ENCODE measurements at regions of chr11 and their contacts with region 1.

Region 1: GRCh38 chr11:117535261-117535781 is 207.7 kb downstream of the CEP164 start:
- DNase-seq: no peak
- H3K4me3 ChIP-seq: no peak overlapping the region
- H3K27ac ChIP-seq: no peak overlapping the region
- H3K4me1 ChIP-seq: no peaks in the 10 kb centered on the region
- CTCF ChIP-seq: no peak

Region 2: DNA sequence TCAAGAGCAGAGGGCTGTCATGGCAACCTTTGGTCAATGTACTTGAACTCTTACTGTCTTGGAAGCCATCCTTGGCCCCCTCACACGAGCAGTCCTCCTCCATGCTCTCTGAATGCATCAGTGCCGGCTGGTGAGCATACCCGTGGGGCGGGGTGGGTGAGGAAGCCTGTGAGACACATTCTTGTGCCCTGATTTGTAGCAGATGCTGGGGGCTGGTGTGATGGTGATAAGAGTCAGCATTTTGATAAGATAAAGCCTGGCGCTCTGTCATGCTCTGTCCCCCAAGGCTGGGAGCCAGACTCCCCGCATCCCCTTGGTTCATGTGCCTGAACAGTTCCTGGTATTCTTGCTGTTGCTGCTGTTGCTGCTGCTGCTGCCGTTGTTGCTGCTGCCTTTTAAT is 677.4 kb before region 1 on chr11:
- CTCF ChIA-PET with region 1: interaction called, 18 read pairs
- POLR2A ChIA-PET with region 1: no interaction called
- intact Hi-C with region 1: no loop called
- DNase-seq: no peak
- H3K4me3 ChIP-seq: no peak overlapping the region
- H3K27ac ChIP-seq: no peak overlapping the region
- H3K4me1 ChIP-seq: peaks cover 16% of the 10 kb centered on the region
- CTCF ChIP-seq: no peak

Region 3: GRCh38 chr11:117479372-117479771 is 55.9 kb before region 1 on chr11:
- CTCF ChIA-PET with region 1: no interaction called
- POLR2A ChIA-PET with region 1: no interaction called
- intact Hi-C with region 1: no loop called
- DNase-seq: peak; percentile 47
- H3K4me3 ChIP-seq: no peak overlapping the region
- H3K27ac ChIP-seq: no peak overlapping the region
- H3K4me1 ChIP-seq: no peaks in the 10 kb centered on the region
- CTCF ChIP-seq: peak; percentile 73

Region 4: DNA sequence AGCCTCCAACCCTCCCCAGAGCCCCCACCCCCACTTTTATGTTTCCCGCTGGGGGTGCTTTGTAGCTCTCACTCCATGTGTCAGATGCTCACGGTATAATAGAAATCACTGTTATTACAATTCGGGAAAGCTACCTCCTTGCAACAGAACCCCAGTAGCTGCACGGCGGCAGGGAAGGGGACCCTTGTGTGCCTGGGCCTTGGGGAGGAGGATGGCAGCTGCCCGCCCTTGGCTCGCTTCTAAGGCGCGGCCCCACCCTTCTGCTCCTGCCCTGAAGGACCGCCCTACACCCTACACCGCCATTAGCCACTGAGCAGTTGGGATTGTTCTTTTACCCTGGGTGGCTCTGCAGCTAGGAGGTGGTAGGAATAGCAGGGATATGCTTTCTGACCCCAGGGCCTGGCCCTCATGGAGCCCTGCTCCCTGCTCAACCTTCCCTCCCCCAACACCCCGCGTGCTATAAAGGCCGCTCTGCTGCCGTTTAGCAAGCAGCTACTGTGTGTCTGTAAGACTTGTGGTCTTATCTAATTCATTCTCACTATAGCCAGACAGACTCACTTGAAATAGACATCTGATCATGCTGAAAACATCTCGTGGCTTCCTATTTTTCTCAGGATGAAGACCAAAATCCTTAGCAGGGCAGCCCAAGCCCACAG is 12.0 kb after region 1 on chr11:
- CTCF ChIA-PET with region 1: no interaction called
- POLR2A ChIA-PET with region 1: no interaction called
- intact Hi-C with region 1: no loop called
- DNase-seq: no peak
- H3K4me3 ChIP-seq: no peak overlapping the region
- H3K27ac ChIP-seq: no peak overlapping the region
- H3K4me1 ChIP-seq: no peaks in the 10 kb centered on the region
- CTCF ChIP-seq: no peak